GM10248 (cell line): ENCODE measurements at regions of chr15 and their contacts with region 1.

Region 1: GRCh38 chr15:34241372-34242330 is 16.8 kb downstream of the EMC4 start:
- DNase-seq: peak; percentile 62
- CTCF ChIP-seq: peak; percentile 53

Region 2: GRCh38 chr15:33822479-33822878 is 419.2 kb before region 1 on chr15:
- CTCF ChIA-PET with region 1: no interaction called
- POLR2A ChIA-PET with region 1: no interaction called
- DNase-seq: no peak
- CTCF ChIP-seq: no peak

Region 3: GRCh38 chr15:34223904-34224596 is 17.6 kb before region 1 on chr15:
- CTCF ChIA-PET with region 1: interaction called, 21 read pairs
- POLR2A ChIA-PET with region 1: no interaction called
- DNase-seq: peak; percentile 31
- CTCF ChIP-seq: no peak

Region 4: DNA sequence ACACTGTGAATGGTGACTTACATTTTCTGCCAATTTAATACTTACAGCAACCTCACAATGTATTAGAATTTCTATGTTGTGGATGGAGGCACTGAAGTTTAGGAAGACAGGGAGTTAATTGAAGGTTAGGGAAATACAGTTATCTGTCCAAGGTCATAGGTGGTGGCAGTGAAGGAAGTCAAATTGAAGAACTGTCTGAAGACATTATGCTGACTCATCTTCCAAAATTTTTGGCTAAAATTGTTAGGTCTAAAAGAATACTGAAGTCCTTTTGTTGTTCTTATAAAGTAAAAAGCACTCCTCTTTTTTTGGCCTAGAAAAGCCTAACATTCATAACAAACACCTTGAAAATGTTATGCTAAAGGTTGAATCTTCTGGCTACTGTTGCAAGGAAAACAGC is 10.9 kb after region 1 on chr15:
- CTCF ChIA-PET with region 1: interaction called, 22 read pairs
- POLR2A ChIA-PET with region 1: no interaction called
- DNase-seq: no peak
- CTCF ChIP-seq: no peak

Region 5: DNA sequence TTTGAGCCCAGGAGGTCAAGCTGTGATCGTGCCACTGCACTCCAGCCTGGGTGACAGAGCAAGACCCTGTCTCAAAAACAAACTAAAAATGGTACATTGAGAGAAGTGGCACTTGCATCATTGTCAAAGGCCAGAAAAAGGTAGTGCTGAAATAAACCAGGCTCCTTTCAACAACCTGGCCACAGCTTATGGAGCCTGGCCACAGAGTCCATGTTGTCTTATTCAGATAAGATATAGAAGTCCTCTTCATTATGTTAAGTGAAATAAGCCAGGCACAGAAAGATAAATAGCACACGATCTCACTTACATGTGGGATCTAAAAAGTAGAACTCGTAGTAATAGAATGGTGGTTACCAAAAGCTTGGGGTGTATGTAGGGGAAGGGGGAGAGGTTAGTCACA is 17.9 kb after region 1 on chr15:
- CTCF ChIA-PET with region 1: interaction called, 22 read pairs
- POLR2A ChIA-PET with region 1: no interaction called
- DNase-seq: no peak
- CTCF ChIP-seq: no peak

Region 6: DNA sequence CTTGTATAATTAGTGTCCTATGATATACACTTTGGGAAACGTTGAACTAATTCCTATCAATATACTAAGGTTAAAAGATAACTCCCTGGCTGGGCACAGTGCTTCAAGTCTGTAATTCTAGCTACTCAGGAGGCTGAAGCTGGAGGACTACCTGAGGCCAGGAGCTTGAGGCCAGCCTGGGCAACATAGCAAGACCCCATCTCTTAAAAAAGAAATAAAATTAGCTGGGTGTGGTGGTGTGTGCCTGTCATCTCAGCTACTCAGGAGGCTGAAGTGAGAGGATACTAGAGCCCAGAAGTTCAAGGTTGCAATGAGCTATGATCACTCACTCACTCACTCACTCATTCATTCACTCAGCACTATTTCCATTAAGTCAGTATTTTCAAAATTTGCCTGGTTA is 40.7 kb after region 1 on chr15:
- CTCF ChIA-PET with region 1: interaction called, 16 read pairs
- POLR2A ChIA-PET with region 1: no interaction called
- DNase-seq: no peak
- CTCF ChIP-seq: no peak

Region 7: GRCh38 chr15:34376856-34377255 is 135.2 kb after region 1 on chr15:
- CTCF ChIA-PET with region 1: no interaction called
- POLR2A ChIA-PET with region 1: no interaction called
- DNase-seq: no peak
- CTCF ChIP-seq: no peak

Region 8: GRCh38 chr15:34650177-34650576 is 408.5 kb after region 1 on chr15:
- CTCF ChIA-PET with region 1: no interaction called
- POLR2A ChIA-PET with region 1: no interaction called
- DNase-seq: peak; percentile 9
- CTCF ChIP-seq: no peak